ENCODE measurements at regions of chr4 and their contacts with region 1.

Region 1: DNA sequence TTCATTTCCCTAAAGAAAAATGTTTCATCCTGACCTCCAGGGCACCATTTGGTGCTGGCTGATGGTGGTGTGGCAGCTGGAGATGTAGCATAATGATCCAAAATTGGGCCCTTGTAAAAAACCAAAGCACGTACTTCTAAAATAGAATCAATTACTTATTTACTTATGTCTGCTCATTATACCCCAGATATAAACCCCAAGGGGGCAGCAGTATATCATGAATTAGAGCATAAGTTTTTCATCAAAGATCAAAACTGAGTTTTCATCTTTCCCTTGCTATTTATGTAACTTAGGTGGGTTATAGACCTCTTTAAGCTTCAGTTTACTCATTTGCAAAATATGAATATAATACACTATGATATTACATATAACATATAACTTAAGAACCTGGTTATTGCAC is 241.1 kb downstream of the TACR3 start:
- DNase-seq: no peak
- ATAC-seq: no peak
- H3K4me3 ChIP-seq: no peak overlapping the region
- H3K27ac ChIP-seq: no peak overlapping the region
- H3K4me1 ChIP-seq: no peaks in the 10 kb centered on the region
- H3K27me3 ChIP-seq: no peaks in the 10 kb centered on the region
- CTCF ChIP-seq: peak in 1 of 3 experiments; percentile 31; a peak in 2 of 6 replicates
- EP300 ChIP-seq: no peak
- POLR2A ChIP-seq: no peak
- RAD21 ChIP-seq: peak; percentile 65

Region 2: GRCh38 chr4:103451341-103451740 is 27.4 kb before region 1 on chr4:
- CTCF ChIA-PET with region 1: no interaction called
- POLR2A ChIA-PET with region 1: no interaction called
- RAD21 ChIA-PET with region 1: no interaction called
- SMC1A ChIA-PET with region 1: no interaction called
- in situ Hi-C with region 1: no loop called
- intact Hi-C with region 1: no loop called
- DNase-seq: no peak
- ATAC-seq: no peak
- H3K4me3 ChIP-seq: no peak overlapping the region
- H3K27ac ChIP-seq: no peak overlapping the region
- H3K4me1 ChIP-seq: no peaks in the 10 kb centered on the region
- H3K27me3 ChIP-seq: no peaks in the 10 kb centered on the region
- CTCF ChIP-seq: no peak
- EP300 ChIP-seq: no peak
- POLR2A ChIP-seq: no peak
- RAD21 ChIP-seq: no peak

Region 3: DNA sequence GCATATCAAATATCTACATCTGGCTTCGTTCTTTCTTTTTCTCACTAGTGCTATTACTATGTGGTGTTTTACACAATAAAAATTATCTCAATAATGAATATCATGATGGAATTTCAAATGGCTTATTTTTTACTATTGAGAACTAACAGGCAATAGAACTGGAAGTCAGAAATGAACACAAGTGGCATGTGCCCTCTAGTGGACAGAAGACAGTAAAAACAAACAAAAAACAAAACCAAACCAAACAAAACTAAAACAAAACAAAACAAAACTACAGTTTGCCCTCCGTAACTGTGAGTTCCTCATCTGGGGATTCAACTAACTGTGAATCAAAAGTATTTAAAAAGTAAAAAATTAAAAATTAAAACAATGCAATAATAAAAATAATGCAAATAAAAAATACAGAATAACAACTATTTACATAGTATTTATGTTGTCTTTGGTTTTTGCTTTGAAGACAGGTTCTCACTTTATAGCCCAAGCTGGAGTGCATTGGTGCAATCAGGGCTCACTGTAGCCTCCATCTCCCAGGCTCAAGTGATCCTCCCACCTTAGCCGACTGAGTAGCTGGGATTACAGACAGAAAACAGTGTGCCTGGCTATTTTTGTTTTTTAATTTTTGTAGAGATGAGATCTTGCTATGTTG is 436.6 kb after region 1 on chr4:
- CTCF ChIA-PET with region 1: interaction called, 3 read pairs
- POLR2A ChIA-PET with region 1: no interaction called
- RAD21 ChIA-PET with region 1: no interaction called
- SMC1A ChIA-PET with region 1: no interaction called
- in situ Hi-C with region 1: no loop called
- intact Hi-C with region 1: loop called (anchors 10 kb)
- DNase-seq: peak; percentile 16
- ATAC-seq: peak; percentile 85
- H3K4me3 ChIP-seq: no peak overlapping the region; the same call in 1 of the 2 replicates
- H3K27ac ChIP-seq: no peak overlapping the region
- H3K4me1 ChIP-seq: no peaks in the 10 kb centered on the region
- H3K27me3 ChIP-seq: no peaks in the 10 kb centered on the region
- CTCF ChIP-seq: peak; percentile 53 to 71 (median 60)
- EP300 ChIP-seq: no peak
- POLR2A ChIP-seq: no peak
- RAD21 ChIP-seq: peak; percentile 54